Endothelial cell of umbilical vein (primary cell): ENCODE measurements at regions of chr15 and their contacts with region 1.

Region 1: DNA sequence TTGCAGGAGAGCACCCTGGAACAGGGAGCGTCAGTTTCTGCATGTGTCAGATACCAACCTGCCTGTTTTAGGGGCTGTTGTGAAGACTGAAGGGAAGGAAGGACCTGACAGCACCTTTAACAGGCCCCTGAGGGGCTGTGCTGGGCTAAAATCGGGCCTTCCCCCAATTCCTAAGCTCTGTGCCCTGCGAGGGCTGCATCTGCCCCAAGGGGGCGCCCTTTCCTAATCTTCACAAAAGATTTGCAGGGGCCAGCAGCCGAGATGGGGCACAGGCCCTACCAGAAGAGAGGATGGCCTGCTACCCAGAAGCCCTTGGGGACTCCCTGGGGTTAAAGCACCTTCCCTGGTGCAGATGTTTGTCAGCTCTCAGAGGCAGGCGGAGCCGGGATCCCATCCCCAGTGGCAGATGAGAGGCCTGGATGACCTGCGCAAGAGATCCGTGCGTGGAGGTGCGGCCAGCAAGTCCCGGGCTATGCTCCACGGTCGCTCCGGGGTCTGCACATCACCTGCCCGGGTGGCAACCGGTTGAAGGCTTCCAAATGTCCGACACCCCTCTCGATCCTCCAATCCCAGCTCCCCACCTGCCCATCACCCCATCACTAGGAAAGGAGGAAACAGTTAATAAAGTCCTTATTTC is 53.6 kb downstream of the RHCG start:
- DNase-seq: no peak
- H3K4me3 ChIP-seq: no peak overlapping the region
- H3K27ac ChIP-seq: no peak overlapping the region
- H3K4me1 ChIP-seq: no peaks in the 10 kb centered on the region
- H3K27me3 ChIP-seq: peaks cover 3 to 6% of the 10 kb centered on the region in 2 experiments
- CTCF ChIP-seq: peak; percentile 64 to 66
- POLR2A ChIP-seq: no peak

Region 2: DNA sequence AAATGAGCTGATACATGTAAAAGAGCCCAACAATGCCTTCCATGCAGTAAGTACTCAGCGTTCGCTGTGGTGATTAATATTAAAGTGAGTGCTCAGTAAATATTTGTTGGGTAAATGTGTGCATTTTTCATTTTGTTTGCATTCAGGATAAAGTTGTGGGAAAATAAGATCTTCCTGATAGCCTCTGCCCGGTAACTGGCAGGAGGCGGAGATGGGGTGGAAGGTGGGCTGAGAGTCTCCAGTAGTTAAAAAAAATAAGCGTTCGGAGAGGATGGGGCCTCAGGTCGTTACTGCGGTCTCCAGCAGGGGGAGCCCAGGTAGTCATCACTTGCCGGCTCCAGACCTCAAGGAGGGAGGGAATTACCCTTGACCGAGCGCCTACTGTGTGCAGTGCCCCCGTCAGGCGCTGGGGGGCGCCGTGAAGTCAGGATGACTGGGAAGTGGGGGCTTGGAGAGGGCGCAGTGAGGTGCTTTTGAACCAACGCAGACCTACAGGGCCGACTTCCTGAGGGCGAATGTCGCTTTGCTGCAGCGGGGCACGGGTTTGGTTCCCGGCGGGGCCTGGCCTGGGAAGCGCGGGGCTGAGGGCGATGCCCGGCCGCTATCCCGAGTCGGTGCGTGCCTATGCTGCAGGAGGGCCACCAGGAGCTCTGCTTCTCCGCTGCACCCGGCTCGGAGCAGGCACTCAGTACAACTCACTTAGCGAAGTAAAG is 26.5 kb before region 1 on chr15:
- CTCF ChIA-PET with region 1: interaction called, 11 read pairs
- POLR2A ChIA-PET with region 1: no interaction called
- dilution Hi-C with region 1: no loop called
- intact Hi-C with region 1: no loop called
- DNase-seq: peak; percentile 71
- H3K4me3 ChIP-seq: no peak overlapping the region
- H3K27ac ChIP-seq: no peak overlapping the region
- H3K4me1 ChIP-seq: no peaks in the 10 kb centered on the region
- H3K27me3 ChIP-seq: peaks cover 48 to 61% of the 10 kb centered on the region in 2 experiments
- CTCF ChIP-seq: peak; percentile 88 to 98
- POLR2A ChIP-seq: no peak

Region 3: DNA sequence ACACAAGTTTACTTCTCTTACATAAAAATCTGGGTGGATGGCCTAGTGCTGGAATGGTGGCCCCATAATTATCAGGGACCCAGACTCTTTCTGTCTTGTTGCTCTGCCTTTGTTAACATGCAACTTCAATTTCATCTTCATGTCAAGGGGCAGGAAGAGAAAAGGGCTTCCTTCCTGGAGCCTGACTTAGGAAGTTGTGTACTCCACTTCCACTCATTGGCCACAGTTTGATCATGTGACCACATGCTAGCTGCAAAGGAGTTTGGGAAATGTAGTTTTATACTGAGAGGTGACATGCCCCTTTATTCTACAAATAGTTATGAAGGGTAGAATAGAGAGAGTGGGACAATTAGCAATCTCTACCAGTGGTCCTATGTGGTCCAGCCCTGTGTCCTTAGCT is 14.3 kb after region 1 on chr15:
- CTCF ChIA-PET with region 1: interaction called, 11 read pairs
- POLR2A ChIA-PET with region 1: no interaction called
- dilution Hi-C with region 1: no loop called
- intact Hi-C with region 1: no loop called
- DNase-seq: no peak
- H3K4me3 ChIP-seq: no peak overlapping the region
- H3K27ac ChIP-seq: no peak overlapping the region
- H3K4me1 ChIP-seq: no peaks in the 10 kb centered on the region
- H3K27me3 ChIP-seq: peaks cover 3 to 9% of the 10 kb centered on the region in 2 experiments
- CTCF ChIP-seq: no peak
- POLR2A ChIP-seq: no peak

Region 4: DNA sequence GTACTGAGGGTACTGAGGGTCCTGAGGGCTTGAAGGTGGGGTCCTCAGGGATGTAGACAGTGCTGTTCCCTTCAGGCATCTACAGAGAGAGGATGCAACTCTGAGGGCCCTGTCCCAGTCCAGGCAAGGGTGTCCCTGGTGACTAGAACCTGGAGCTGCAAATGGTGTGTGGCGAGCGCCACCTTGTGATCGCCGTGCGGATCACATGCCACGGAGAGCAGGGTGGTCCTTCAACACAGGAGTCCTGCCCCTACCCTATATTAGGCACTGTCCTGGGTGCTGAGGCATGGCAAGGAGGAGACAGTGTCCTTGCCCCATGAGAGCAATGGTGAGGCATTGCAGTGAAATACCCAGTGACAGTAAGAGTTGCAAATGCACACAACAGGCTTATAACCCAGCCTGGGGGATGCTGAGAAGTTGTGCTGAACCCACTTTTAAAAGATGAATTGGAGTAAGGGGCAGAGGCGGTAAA is 30.0 kb after region 1 on chr15:
- CTCF ChIA-PET with region 1: interaction called, 37 read pairs
- POLR2A ChIA-PET with region 1: no interaction called
- dilution Hi-C with region 1: no loop called
- intact Hi-C with region 1: loop called (anchors 1 kb)
- DNase-seq: peak; percentile 67
- H3K4me3 ChIP-seq: no peak overlapping the region
- H3K27ac ChIP-seq: no peak overlapping the region
- H3K4me1 ChIP-seq: no peaks in the 10 kb centered on the region
- H3K27me3 ChIP-seq: peaks cover 13 to 19% of the 10 kb centered on the region in 2 experiments
- CTCF ChIP-seq: peak; percentile 81 to 93
- POLR2A ChIP-seq: no peak

Region 5: GRCh38 chr15:89556413-89557262 is 113.8 kb after region 1 on chr15:
- CTCF ChIA-PET with region 1: interaction called, 6 read pairs
- POLR2A ChIA-PET with region 1: no interaction called
- dilution Hi-C with region 1: no loop called
- intact Hi-C with region 1: loop called (anchors 5 kb)
- DNase-seq: peak; percentile 82
- H3K4me3 ChIP-seq: no peak overlapping the region
- H3K27ac ChIP-seq: no peak overlapping the region
- H3K4me1 ChIP-seq: no peaks in the 10 kb centered on the region
- H3K27me3 ChIP-seq: peaks cover 4 to 14% of the 10 kb centered on the region in 2 experiments
- CTCF ChIP-seq: peak; percentile 61 to 71
- POLR2A ChIP-seq: no peak